BJ (cell line): ENCODE measurements at regions of chr1 and their contacts with region 1.

Region 1: GRCh38 chr1:68232354-68233148 is at the start of gene WLS:
- DNase-seq: no peak
- H3K4me3 ChIP-seq: peak within 1 kb of the TSS; percentile 78
- H3K27me3 ChIP-seq: no peaks in the 10 kb centered on the region
- CTCF ChIP-seq: peak; percentile 44
- polyA plus RNA-seq, gene WLS: 28.4 and 34.9 TPM in 2 replicates

Region 2: DNA sequence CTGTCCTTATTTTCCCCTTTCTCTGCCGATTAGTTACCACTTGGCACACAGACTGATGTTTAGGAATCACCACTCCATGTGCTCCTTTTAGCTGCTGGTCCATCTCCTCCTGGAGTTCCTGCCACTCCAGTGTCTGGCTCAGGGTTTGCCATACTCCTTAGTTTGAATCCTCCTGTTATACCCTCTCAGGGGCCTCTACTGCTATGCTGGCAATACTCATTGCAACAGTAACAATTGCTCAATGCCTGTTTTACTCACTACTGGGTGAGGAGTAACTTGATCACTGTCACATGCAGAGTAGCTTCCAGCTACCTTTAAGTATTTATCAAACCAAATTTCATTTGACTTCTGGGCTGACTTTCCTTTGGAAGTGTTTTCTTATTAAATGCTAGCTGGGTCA is 106.9 kb after region 1 on chr1:
- CTCF ChIA-PET with region 1: interaction called, 6 read pairs
- POLR2A ChIA-PET with region 1: interaction called, 13 read pairs
- DNase-seq: no peak
- H3K4me3 ChIP-seq: no peak overlapping the region
- H3K27me3 ChIP-seq: peaks cover 6% of the 10 kb centered on the region
- CTCF ChIP-seq: no peak